Cardiac septum (tissue), 1 donor: ENCODE measurements at regions of chr19 and their contacts with region 1.

Region 1: GRCh38 chr19:925526-926322 is at the start of gene ARID3A:
- DNase-seq: peak; percentile 90
- total RNA-seq, gene ARID3A: 7.8 TPM

Region 2: GRCh38 chr19:771332-771785 is 154.4 kb before region 1 on chr19:
- intact Hi-C with region 1: loop called (anchors 1 kb)
- DNase-seq: no peak

Region 3: DNA sequence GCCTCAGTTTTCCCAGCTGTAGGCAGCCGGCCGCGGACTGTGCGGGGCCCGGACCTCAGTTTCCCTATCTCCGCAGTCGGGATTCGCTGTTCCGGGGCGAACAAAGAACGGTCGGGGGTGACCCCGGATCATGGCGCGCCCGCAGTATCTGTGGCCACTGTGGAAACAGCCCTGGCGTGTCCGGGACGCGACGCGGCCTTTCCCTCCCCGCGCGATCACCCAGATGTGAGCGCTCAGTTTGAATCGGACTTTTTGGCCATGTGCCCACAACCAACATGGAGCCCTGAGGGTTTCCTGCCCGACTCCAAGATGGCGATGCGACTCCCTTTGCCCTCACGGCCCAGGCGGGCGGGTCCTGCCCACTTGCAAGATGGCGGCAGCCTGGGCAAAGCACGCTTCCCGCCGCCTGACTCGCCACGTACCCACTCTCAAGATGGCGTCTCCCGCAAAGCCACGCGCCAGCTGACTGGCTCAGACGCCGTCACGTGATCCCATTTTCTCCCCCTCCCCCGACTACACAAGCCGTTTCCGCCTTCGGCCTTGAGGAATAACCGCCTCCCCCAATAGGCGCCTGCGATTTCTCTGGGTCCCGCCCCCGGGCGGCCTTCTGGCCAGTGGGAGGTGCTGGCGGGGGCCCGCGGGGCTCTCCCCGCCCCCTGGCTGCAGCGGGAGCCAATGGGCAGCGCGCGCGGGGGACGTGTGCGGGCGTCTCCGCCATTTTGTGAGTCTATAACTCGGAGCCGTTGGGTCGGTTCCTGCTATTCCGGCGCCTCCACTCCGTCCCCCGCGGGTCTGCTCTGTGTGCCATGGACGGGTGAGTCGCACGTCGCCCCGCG is 128.8 kb before region 1 on chr19 and contains the start of gene PTBP1:
- intact Hi-C with region 1: no loop called
- DNase-seq: peak; percentile 100
- total RNA-seq, gene PTBP1: 76.9 TPM

Region 4: GRCh38 chr19:843180-843835 is 82.4 kb before region 1 on chr19:
- intact Hi-C with region 1: no loop called
- DNase-seq: no peak

Region 5: DNA sequence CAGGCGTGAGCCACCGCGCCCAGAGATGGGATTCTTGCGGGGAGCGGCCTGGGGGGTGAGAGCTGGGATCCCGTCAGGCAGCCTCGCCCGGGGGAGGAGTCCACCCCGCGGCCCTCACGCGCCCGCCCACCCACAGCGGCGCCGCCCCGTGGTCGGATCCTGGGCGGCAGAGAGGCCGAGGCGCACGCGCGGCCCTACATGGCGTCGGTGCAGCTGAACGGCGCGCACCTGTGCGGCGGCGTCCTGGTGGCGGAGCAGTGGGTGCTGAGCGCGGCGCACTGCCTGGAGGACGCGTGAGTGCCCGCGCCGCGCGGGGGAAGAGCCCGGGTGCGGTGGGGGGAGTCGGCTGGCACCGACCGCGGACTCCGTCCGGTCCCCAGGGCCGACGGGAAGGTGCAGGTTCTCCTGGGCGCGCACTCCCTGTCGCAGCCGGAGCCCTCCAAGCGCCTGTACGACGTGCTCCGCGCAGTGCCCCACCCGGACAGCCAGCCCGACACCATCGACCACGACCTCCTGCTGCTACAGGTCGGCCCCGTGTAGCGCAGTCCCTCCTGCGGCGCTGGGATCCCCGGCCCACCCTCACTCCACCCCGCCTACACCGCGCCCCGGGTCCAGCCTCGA is 65.1 kb before region 1 on chr19:
- intact Hi-C with region 1: loop called (anchors 5 kb)
- DNase-seq: no peak

Region 6: DNA sequence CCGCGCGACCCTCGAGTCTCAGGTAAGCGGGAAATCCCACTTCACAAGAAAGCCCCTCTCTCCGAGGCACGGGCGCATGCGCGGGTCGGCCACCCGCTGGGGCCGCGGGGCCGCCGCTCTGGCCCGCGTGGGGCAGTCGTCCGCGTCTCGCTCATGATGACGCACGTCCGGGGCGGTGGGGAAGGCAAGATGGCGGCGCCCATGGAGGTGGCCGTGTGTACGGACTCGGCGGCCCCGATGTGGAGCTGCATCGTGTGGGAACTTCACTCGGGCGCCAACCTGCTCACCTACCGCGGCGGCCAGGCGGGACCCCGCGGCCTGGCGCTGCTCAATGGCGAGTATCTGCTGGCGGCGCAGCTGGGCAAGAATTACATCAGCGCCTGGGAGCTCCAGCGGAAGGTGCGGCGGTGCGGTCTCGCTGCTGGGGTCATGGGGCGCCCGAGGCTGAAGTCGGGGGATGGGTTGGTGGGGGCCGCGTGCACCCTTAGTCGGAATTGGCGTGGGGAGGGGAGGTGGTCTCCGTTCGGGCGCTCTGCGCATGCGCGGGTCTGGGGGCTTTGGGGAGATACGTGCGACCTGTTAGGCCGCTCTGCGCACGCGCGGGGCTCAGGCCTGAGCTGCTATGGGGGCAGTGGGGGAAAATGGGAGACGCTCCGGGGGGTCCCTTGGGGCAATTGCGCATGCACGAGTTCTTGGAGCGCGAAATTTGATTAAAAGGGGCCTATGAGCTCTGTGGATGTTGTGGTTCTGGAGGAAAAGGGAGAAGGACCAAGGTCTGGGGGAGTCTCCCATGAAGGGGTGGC is 58.6 kb after region 1 on chr19 and contains the start of gene WDR18:
- intact Hi-C with region 1: loop called (anchors 1 kb)
- DNase-seq: peak; percentile 97
- total RNA-seq, gene WDR18: 17.6 TPM

Region 7: GRCh38 chr19:1094975-1095701 is 169.4 kb after region 1 on chr19 and contains the start of gene POLR2E:
- intact Hi-C with region 1: loop called (anchors 10 kb)
- DNase-seq: peak; percentile 100
- total RNA-seq, gene POLR2E: 125 TPM

Region 8: DNA sequence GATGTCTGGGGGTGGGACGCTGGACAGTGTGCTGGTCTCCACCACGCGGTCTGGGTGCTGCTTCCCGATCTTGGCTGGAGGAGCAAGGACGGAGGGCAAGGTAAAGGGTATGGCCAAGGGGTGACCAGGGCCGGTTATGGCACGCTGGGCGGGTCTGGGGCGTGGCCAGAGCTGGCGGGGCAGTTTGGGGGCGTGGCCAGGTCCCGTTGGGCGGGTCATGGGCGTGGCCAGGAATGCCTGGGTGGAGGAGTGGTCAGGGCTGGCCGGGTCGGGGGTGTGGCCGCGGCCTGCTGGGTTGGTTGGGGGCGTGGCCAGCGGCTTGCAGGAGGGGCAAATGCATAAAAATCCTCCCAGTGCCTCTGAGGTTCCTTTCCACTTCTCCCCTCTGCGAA is 197.2 kb after region 1 on chr19:
- intact Hi-C with region 1: no loop called
- DNase-seq: peak; percentile 89

Region 9: GRCh38 chr19:1241417-1242095 is 315.8 kb after region 1 on chr19 and contains the start of gene ATP5F1D:
- intact Hi-C with region 1: loop called (anchors 5 kb)
- DNase-seq: peak; percentile 98
- total RNA-seq, gene ATP5F1D: 486 TPM